Left ventricle myocardium superior (tissue), 1 donor: ENCODE measurements at regions of chr6 and their contacts with region 1.

Region 1: DNA sequence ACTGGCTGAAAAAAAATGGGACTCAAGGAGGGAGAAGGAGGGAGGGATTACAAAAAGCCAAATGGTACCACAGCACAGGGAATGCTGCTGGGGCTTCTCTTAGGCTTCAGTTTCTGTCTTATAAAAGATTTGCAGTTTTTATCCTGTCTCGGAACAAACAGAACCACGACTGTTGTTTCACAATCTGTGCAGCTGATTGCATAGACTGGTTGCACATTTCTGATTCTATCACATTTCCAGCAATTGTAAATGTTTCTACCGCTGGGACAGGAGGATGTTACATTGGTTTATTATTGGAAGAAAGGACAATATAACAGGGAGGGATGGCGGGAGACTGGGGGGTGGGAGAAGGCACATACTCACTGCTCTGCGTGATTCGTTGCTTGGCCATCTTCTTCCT is 73.5 kb upstream of the ARID1B start:
- DNase-seq: no peak
- ATAC-seq: no peak

Region 2: GRCh38 chr6:156767603-156768467 is 64.1 kb after region 1 on chr6:
- intact Hi-C with region 1: loop called (anchors 10 kb)
- DNase-seq: no peak
- ATAC-seq: no peak